H1 (cell line): ENCODE measurements at regions of chrX and their contacts with region 1.

Region 1: DNA sequence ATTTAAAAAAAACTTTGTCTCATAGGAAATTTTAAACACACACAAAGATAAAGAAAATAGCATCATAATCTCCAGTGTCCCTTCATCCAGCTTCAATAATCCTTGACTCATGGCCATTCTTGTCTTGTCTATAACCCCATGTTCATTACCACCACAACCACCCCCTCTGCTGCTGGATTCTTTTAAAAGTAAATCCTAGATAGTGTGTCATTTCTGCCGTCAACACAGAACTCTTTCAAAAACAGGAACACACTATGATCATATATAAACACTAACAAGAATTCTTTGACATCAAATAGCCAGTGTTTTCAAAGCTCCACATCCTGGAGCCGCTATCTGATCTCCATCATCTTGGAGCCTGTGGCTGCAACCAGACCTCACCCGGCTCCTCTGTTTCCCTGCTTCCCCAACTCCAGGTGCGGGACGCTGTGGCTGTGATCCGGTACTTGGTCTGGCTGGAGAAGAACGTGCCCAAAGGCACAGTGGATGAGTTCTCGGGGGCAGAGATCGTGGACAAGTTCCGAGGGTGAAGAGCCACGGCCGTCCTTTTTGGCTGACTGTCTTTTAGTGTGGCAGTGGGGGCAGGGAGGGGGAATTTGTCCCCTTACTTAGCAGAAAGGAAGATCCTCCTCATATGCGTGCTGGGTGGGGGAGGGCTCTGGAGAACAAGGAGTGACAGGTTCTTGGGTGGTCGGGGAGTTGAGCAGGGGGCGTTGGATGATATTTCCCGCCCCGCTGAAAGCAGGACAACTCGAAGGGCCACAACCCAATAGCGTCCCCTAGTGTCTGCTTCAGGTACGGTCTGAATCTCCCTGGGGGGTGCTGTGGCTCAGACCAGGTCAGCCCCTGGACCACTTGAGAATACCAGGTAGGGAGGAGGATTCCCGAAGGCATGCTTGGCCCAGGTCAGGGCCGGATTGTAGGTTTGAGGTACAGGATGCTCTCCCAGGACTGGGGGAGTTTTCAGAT is 15.6 kb downstream of the XPNPEP2 start:
- DNase-seq: peak in 1 of 2 experiments; percentile 81
- H3K4me3 ChIP-seq: no peak overlapping the region
- H3K27ac ChIP-seq: no peak overlapping the region
- H3K4me1 ChIP-seq: no peaks in the 10 kb centered on the region
- H3K27me3 ChIP-seq: no peaks in the 10 kb centered on the region
- CTCF ChIP-seq: peak in 2 of 3 experiments; percentile 76 to 86; a peak in 3 of 4 replicates
- EP300 ChIP-seq: no peak
- POLR2A ChIP-seq: no peak
- RAD21 ChIP-seq: peak; percentile 81

Region 2: DNA sequence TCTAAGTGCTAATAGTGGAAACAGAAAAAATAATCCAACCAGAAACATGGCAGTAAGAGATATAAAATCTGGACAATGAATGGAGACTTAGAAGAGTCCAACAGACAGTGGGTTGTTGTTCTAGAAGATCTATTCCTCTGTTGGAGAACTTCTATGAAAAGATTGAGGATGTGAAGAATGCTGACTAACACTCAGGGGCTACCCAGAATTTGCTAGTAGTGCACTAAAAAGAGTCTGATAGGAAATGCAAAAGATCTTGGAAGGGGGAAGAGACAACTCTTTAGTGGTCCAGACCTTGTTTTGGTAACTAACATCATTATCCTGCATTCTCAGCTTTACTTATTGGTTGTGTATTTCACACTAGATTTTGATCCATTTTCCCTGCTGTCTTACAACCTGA is 308.9 kb before region 1 on chrX:
- CTCF ChIA-PET with region 1: no interaction called
- POLR2A ChIA-PET with region 1: no interaction called
- DNase-seq: no peak
- H3K4me3 ChIP-seq: no peak overlapping the region
- H3K27ac ChIP-seq: no peak overlapping the region
- H3K4me1 ChIP-seq: no peaks in the 10 kb centered on the region
- H3K27me3 ChIP-seq: no peaks in the 10 kb centered on the region
- CTCF ChIP-seq: no peak
- EP300 ChIP-seq: no peak
- POLR2A ChIP-seq: no peak
- RAD21 ChIP-seq: no peak

Region 3: DNA sequence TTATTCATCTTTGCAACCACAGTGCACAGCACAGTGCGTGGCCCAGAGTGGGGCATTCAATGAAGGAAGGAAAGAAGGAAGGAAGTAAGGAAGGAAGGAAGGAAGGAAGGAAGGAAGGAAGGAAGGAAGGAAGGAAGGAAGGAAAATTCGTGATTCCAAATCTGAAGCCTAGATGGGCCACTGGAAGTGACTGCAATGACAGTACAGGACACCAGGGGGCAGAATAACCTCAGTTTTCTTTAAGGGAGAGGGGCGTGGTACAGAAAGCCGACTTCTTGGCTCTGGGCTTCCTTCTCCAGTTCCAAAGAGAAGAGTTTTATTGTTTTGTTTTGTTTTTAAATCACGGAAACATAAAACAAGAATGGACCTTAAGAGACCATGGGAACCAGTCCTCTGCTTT is 147.4 kb before region 1 on chrX:
- CTCF ChIA-PET with region 1: interaction called, 48 read pairs
- POLR2A ChIA-PET with region 1: no interaction called
- DNase-seq: peak in 1 of 2 experiments; percentile 72
- H3K4me3 ChIP-seq: no peak overlapping the region
- H3K27ac ChIP-seq: no peak overlapping the region
- H3K4me1 ChIP-seq: no peaks in the 10 kb centered on the region; a peak in 2 of 7 replicates
- H3K27me3 ChIP-seq: 0 out of 7 replicates have a peak, but pooled peaks cover 0 to 2% (median 0%) of the 10 kb centered on the region in 4 experiments
- CTCF ChIP-seq: peak; percentile 12 to 67 (median 65)
- EP300 ChIP-seq: no peak
- POLR2A ChIP-seq: no peak
- RAD21 ChIP-seq: peak; percentile 78 to 85

Region 4: DNA sequence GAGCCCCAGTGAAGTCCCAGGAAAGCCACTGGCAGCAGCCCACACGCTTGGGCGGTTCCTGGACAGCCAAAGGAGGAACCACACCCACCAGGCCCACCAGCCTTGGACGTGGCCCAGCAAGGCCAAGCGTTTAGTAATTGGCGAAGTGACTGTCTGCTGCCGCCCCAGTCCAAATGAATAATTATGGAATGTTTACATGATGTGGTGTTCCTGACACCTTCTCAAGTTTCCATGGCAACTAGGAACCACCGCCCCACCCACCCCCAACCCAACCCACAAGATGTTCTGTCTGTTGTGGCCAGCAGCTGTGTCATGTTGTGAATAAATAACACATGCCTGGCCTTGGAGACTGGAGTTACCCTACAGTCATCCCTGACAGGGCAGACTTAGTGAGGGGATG is 121.9 kb before region 1 on chrX:
- CTCF ChIA-PET with region 1: interaction called, 12 read pairs
- POLR2A ChIA-PET with region 1: no interaction called
- DNase-seq: no peak
- H3K4me3 ChIP-seq: no peak overlapping the region
- H3K27ac ChIP-seq: no peak overlapping the region
- H3K4me1 ChIP-seq: no peaks in the 10 kb centered on the region
- H3K27me3 ChIP-seq: no peaks in the 10 kb centered on the region
- CTCF ChIP-seq: no peak
- EP300 ChIP-seq: no peak
- POLR2A ChIP-seq: no peak
- RAD21 ChIP-seq: no peak

Region 5: DNA sequence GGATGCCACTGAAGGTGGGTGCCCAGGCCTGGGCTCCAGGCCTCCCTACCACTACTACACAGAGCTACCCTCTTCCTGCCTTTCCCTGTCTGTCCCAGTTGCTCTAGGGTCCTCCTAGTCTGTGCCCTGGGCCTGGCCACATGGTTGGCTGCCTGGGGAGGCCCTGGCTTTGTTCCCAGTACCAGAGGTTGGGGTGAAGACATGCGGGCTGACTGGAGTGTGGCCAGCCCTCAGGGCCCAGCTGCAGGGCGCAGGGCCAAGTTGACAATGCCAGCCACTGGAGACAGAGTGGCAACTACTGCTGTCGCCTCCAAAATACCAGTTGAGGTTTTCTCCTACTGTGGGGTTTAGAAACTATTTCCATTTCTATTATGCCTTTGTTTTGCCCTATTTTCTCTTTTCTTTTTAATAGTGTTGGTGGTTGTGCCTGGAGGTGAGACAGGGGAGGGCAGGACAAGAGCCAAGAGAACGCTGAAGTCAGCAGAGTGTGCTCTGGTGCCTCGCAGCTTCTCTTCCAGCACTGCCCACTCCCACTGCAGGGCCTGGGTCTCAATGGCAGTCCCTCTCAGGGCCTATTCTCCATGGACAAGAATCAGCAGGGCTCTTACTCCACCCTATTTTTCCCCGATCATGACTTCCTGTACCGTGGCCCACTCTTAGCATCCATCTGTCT is 47.8 kb before region 1 on chrX:
- CTCF ChIA-PET with region 1: no interaction called
- POLR2A ChIA-PET with region 1: no interaction called
- DNase-seq: no peak
- H3K4me3 ChIP-seq: no peak overlapping the region
- H3K27ac ChIP-seq: no peak overlapping the region
- H3K4me1 ChIP-seq: no peaks in the 10 kb centered on the region
- H3K27me3 ChIP-seq: no peaks in the 10 kb centered on the region
- CTCF ChIP-seq: no peak
- EP300 ChIP-seq: no peak
- POLR2A ChIP-seq: no peak
- RAD21 ChIP-seq: no peak

Region 6: GRCh38 chrX:129726307-129727111 is 27.8 kb before region 1 on chrX:
- CTCF ChIA-PET with region 1: interaction called, 18 read pairs
- POLR2A ChIA-PET with region 1: no interaction called
- DNase-seq: peak; percentile 34 to 75
- H3K4me3 ChIP-seq: no peak overlapping the region
- H3K27ac ChIP-seq: no peak overlapping the region
- H3K4me1 ChIP-seq: peaks cover 0 to 2% (median 0%) of the 10 kb centered on the region in 4 experiments; a peak in 2 of 7 replicates
- H3K27me3 ChIP-seq: no peaks in the 10 kb centered on the region; a peak in 1 of 7 replicates
- CTCF ChIP-seq: peak; percentile 70 to 93 (median 82)
- EP300 ChIP-seq: no peak
- POLR2A ChIP-seq: no peak
- RAD21 ChIP-seq: peak; percentile 94 to 98

Region 7: DNA sequence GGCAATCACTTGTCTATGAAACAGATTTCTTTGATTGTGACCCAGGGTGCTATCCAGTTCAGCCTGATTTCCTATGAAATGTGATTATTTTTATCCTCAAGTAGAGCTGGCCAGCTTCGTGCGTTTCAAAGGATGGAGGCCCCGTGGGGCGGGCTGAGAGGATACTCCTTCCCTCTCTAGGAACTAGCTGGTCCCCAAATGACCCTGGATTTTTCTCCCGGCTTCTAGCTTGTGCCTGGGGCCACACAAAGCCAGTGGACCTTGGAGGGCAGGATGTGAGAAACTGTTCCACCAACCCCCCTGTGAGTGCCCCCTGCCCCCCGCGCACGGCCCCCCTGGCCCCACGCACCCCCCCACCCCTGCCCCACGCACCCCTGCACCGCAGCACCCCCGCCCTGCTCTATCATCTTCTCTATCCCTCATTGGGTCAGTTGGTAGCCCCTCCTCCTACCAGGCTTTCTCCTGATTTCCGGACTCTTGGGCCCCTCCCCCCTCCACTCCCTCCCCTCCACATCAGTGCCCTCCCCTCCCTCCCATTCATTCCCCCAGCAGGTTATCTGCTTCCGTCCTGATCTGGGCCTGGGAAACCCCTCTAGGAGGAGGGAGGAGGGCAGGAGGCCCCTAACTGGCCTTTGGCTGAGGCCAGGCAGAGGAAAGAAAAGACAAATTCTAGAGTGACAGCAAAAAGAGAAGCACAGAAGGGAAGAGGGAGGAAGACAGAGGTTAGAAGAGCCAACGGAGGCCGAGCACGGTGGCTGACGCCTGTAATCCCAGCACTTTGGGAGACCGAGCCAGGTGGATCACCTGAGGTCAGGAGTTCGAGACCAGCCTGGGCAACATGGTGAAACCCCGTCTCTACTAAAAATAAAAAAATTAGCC is 12.2 kb before region 1 on chrX:
- CTCF ChIA-PET with region 1: interaction called, 13 read pairs
- POLR2A ChIA-PET with region 1: no interaction called
- DNase-seq: peak in 1 of 2 experiments; percentile 54
- H3K4me3 ChIP-seq: no peak overlapping the region
- H3K27ac ChIP-seq: no peak overlapping the region
- H3K4me1 ChIP-seq: peaks cover 0 to 12% (median 4%) of the 10 kb centered on the region in 4 experiments; a peak in 4 of 7 replicates
- H3K27me3 ChIP-seq: no peaks in the 10 kb centered on the region; a peak in 1 of 7 replicates
- CTCF ChIP-seq: no peak
- EP300 ChIP-seq: peak in 1 of 2 experiments; percentile 40; a peak in 1 of 3 replicates
- POLR2A ChIP-seq: no peak
- RAD21 ChIP-seq: no peak

Region 8: DNA sequence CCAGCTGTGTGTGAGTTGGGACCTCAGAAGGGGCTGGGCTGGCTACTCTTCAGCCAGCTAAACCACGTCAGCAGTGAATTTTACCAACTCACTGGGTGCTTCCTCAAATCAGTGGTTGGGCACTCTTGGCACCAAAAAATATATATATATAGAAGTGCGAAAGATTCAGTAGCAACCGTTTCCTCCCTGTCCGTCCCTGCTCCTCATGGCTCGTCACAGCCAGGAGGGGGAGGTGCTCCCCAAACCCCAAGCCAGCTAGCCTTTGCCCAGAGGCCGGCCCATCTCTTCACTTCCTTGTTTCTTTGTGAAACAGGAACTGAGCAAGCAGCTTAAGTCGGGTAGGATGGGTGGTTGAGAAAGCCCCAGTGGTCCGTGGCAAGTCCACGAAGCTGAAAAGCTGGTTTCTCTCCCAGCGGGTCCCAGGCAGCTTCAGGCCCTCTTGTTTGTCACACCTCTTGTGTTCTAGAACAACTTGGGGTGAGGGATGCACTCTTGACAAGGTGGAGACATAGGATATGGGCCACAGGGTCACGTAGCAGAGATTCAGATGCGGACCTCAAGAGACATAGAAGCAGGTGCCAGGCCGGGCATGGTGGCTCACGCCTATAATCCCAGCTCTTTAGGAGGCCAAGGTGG is 18.6 kb after region 1 on chrX:
- CTCF ChIA-PET with region 1: interaction called, 24 read pairs
- POLR2A ChIA-PET with region 1: interaction called, 3 read pairs
- DNase-seq: no peak
- H3K4me3 ChIP-seq: no peak overlapping the region
- H3K27ac ChIP-seq: no peak overlapping the region
- H3K4me1 ChIP-seq: peaks cover 0 to 2% (median 0%) of the 10 kb centered on the region in 4 experiments; a peak in 3 of 7 replicates
- H3K27me3 ChIP-seq: no peaks in the 10 kb centered on the region
- CTCF ChIP-seq: no peak
- EP300 ChIP-seq: no peak
- POLR2A ChIP-seq: no peak
- RAD21 ChIP-seq: no peak

Region 9: GRCh38 chrX:129823115-129823514 is 68.8 kb after region 1 on chrX:
- CTCF ChIA-PET with region 1: interaction called, 20 read pairs
- POLR2A ChIA-PET with region 1: no interaction called
- DNase-seq: no peak
- H3K4me3 ChIP-seq: no peak overlapping the region
- H3K27ac ChIP-seq: no peak overlapping the region
- H3K4me1 ChIP-seq: no peaks in the 10 kb centered on the region
- H3K27me3 ChIP-seq: no peaks in the 10 kb centered on the region
- CTCF ChIP-seq: peak; percentile 17 to 53 (median 49)
- EP300 ChIP-seq: no peak
- POLR2A ChIP-seq: no peak
- RAD21 ChIP-seq: peak; percentile 48 to 60